Spleen (tissue), 13 donors: ENCODE measurements at regions of chr15 and their contacts with region 1.

Region 1: GRCh38 chr15:90062023-90062442 is 40.2 kb downstream of the IDH2 start:
- DNase-seq: no peak
- H3K4me3 ChIP-seq: no peak overlapping the region
- H3K27ac ChIP-seq: peak overlapping the region in 7 of 8 donors; percentile 38 to 97 (median 90)
- H3K4me1 ChIP-seq: peaks cover 70 to 100% (median 92%) of the 10 kb centered on the region in 6 donors
- H3K27me3 ChIP-seq: no peaks in the 10 kb centered on the region
- CTCF ChIP-seq: no peak
- POLR2A ChIP-seq: no peak

Region 2: DNA sequence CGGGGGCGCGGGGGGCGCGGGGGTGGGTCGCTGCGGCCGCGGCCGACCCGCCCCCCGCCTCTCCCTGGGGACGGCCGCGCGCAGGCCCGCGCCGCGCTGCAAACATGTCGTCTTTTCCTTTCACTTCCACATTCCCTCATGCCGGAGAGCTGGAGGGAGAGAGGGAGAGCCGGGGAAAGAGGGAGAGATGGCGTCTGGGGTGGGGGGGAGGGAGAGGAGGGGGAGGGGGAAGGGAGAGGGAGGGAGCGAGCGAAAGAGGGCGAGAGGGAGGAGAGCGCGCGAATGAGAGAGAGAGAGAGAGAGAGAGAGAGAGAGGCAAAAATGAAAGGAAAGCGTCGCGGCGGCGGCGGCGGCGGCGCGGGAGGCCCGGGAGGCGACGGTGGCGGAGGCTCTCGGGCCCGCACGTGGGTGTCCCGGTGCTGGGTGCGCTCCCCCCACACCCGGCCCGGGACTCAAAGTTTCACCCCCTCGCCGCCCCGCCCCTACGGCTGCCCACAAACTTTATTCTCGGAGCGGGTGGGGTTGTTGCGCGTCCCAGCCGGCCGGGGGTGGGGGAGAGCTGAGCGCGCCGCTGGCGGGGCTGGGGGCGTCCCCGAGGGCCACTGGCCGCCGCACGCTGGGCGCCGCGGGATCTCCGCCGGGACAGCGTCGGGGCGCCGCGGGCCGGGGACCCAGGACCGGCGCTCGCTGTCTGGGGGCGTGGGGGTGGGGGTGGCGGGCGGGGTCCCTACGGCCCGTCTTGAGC is 60.2 kb before region 1 on chr15:
- intact Hi-C with region 1: loop called (anchors 10 kb)
- DNase-seq: peak; percentile 92
- H3K4me3 ChIP-seq: peak overlapping the region; percentile 71 to 92 (median 76)
- H3K27ac ChIP-seq: peak overlapping the region; percentile 79 to 97 (median 94)
- H3K4me1 ChIP-seq: peaks cover 25 to 78% (median 65%) of the 10 kb centered on the region in 6 donors
- H3K27me3 ChIP-seq: no peaks in the 10 kb centered on the region
- CTCF ChIP-seq: no peak
- POLR2A ChIP-seq: no peak